ENCODE measurements at regions of chr5 and their contacts with region 1.

Region 1: GRCh38 chr5:52787600-52788504 is at the starts of genes ITGA1 and PELO:
- DNase-seq: peak; percentile 89
- total RNA-seq, gene ITGA1: 40.3 TPM
- total RNA-seq, gene PELO: 29.3 TPM

Region 2: GRCh38 chr5:52693280-52693679 is 94.6 kb before region 1 on chr5:
- intact Hi-C with region 1: loop called (anchors 5 kb)
- DNase-seq: peak; percentile 73

Region 3: GRCh38 chr5:52725065-52725746 is 62.6 kb before region 1 on chr5:
- intact Hi-C with region 1: loop called (anchors 5 kb)
- DNase-seq: no peak

Region 4: GRCh38 chr5:52840277-52841050 is 52.6 kb after region 1 on chr5:
- intact Hi-C with region 1: loop called (anchors 5 kb)
- DNase-seq: peak; percentile 76

Region 5: DNA sequence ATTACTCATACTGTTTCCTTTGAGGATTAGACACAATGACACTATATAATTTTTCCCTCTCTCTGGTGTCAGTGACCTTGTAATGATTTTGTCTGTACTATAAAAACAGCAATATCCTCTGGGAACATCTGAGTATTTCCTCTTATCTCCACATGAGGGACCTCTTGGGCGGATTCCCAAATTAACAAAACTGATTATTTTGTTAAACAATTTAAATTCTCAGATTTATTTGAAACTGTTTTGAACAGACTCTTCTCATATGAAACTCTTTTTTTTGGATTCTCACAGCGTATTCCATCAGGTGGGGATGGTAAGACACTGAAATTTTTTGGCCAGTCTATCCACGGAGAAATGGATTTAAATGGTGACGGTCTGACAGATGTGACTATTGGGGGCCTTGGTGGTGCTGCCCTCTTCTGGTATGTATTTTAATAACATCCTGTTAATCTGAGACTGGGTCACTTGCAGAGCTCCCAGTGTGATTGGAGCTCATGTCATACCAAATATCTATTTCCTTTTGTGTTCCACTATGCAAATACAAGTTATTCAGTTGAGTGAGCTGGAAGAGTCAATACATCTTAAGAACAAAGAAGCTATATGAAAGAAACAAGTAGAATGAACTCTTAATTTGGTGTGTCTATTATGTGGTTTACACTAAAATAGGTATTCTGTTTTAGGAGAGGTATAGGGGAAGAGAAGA is 127.5 kb after region 1 on chr5:
- intact Hi-C with region 1: loop called (anchors 2 kb)
- DNase-seq: no peak

Region 6: GRCh38 chr5:53089345-53089991 is 301.6 kb after region 1 on chr5:
- intact Hi-C with region 1: no loop called
- DNase-seq: no peak

Region 7: DNA sequence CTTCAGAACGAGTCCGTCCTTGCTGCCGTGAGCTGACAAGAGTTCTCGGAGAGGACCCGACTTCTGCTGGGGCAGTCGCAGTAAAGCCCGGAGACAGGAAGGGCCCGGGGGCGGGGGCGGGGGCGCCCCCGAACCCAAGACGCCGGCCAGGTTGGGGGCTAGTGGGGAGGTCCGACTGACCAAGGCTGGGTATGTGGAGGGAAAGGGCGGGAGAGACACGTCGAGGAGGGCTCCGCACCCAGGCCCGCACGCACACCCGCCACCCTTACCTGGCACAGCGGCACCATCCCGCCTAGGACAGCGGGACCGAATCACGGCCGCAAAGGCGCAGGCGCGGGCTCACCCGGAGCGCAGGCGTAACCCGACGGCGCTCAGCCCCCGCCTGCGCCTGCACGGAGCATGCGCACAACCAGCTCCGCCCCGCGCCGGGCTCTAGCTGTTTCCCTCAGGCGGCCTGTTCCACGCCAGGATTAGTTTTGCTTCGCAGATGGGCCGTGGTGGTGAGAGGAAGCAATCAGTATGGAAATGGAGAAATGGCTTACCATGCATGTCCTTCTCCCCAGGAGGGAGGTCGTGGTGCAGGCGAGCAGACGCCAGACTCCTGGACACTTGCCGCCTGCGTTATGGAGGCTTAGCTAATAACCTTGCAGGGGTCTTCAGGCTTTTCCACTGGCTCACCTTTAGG is 321.7 kb after region 1 on chr5 and contains the start of gene MOCS2:
- intact Hi-C with region 1: loop called (anchors 10 kb)
- DNase-seq: peak; percentile 96
- total RNA-seq, gene MOCS2: 64.4 TPM